Naive thymus-derived CD4-positive, alpha-beta T cell (primary cell): ENCODE measurements at regions of chr19 and their contacts with region 1.

Region 1: GRCh38 chr19:12294249-12295158 is at the start of gene ZNF44:
- DNase-seq: peak; percentile 77 to 96 (median 93)
- ATAC-seq: peak; percentile 99
- H3K4me3 ChIP-seq: peak within 1 kb of the TSS; percentile 99
- H3K4me3 Mint-ChIP-seq: peak within 1 kb of the TSS; percentile 89 to 99 (median 99)
- H3K27ac ChIP-seq: peak within 1 kb of the TSS; percentile 90
- H3K27ac Mint-ChIP-seq: peak within 1 kb of the TSS; percentile 93 to 99 (median 97)
- H3K4me1 ChIP-seq: peaks cover 13 to 20% of the 10 kb centered on the region in 2 donors
- H3K4me1 Mint-ChIP-seq: peaks cover 25 to 52% (median 36%) of the 10 kb centered on the region in 7 donors
- H3K27me3 ChIP-seq: no peaks in the 10 kb centered on the region
- H3K27me3 Mint-ChIP-seq: no peaks in the 10 kb centered on the region
- total RNA-seq, gene ZNF44: 16.3 to 67.4 (median 31.3) TPM

Region 2: GRCh38 chr19:12202250-12202649 is 92.3 kb before region 1 on chr19:
- CTCF ChIA-PET with region 1: interaction called, 5 read pairs
- POLR2A ChIA-PET with region 1: no interaction called
- intact Hi-C with region 1: loop called in 1 of 2 experiments (anchors 2 kb)
- DNase-seq: peak in 8 of 9 donors; percentile 20 to 68 (median 46)
- ATAC-seq: peak; percentile 82
- H3K4me3 ChIP-seq: no peak overlapping the region
- H3K4me3 Mint-ChIP-seq: peak overlapping the region in 4 of 10 donors; percentile 3 to 54 (median 25)
- H3K27ac ChIP-seq: no peak overlapping the region
- H3K27ac Mint-ChIP-seq: peak overlapping the region in 6 of 9 donors; percentile 26 to 81 (median 61)
- H3K4me1 ChIP-seq: no peaks in the 10 kb centered on the region
- H3K4me1 Mint-ChIP-seq: peaks cover 6 to 53% (median 22%) of the 10 kb centered on the region in 7 donors
- H3K27me3 ChIP-seq: no peaks in the 10 kb centered on the region
- H3K27me3 Mint-ChIP-seq: no peaks in the 10 kb centered on the region

Region 3: DNA sequence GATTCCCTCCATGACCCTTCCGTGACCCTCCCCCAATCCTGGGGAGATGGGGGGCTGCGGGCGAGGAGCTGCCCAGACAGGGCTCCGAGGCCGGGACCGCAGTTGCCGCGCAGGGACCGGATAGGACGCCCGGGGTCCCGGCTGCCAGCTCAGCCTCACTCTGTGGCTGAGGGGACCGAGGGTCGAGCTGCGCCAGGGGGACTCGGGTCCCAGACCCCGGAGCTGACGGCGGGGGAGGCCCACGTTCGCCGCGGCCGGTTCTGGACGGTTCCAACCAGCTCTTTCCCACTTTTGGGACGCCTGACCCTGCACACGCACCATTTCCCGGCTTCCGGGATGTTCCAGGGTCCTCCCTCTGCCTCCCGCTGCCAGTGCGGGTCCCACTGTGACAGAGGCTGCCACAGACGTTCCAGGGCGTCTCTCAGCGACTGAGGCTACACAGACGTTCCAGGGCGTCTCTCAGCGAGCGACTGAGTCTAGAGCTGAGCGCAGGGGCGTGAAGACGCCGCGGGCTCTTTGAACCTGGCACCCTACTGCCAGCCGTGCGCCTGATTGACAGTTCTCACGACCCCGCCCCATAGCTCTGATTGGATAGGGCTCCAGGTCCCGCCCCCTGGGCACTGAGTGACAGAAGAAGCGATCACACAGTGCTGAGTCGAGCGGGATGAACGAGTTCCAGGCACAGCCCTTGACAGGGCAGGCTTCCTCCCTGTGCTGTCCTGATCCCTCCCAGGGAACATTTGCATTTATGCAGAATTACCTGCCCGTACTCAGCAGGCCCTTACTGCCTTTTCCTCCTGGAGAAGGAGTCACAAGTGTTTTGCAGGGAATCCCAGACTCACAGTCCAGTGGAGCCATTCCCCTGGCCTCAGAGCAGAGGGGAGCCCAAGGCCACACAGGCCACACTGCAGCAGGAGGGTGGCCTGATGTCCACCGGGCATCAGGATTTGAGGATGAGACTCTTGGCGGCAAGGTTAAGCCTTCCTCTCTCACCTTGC is 39.0 kb after region 1 on chr19 and contains the start of gene ZNF563:
- CTCF ChIA-PET with region 1: interaction called, 6 read pairs
- POLR2A ChIA-PET with region 1: interaction called, 164 read pairs
- intact Hi-C with region 1: loop called (anchors 1 kb)
- DNase-seq: peak; percentile 91 to 99 (median 98)
- ATAC-seq: peak; percentile 99
- H3K4me3 ChIP-seq: peak within 1 kb of the TSS; percentile 61
- H3K4me3 Mint-ChIP-seq: peak within 1 kb of the TSS; percentile 90 to 100 (median 96)
- H3K27ac ChIP-seq: peak within 1 kb of the TSS; percentile 92
- H3K27ac Mint-ChIP-seq: peak within 1 kb of the TSS; percentile 92 to 99 (median 97)
- H3K4me1 ChIP-seq: peaks cover 9 to 22% of the 10 kb centered on the region in 2 donors
- H3K4me1 Mint-ChIP-seq: peaks cover 23 to 49% (median 40%) of the 10 kb centered on the region in 7 donors
- H3K27me3 ChIP-seq: no peaks in the 10 kb centered on the region
- H3K27me3 Mint-ChIP-seq: no peaks in the 10 kb centered on the region
- total RNA-seq, gene ZNF563: 2.8 to 23.2 (median 6.1) TPM

Region 4: GRCh38 chr19:12440541-12441316 is 146.2 kb after region 1 on chr19 and contains the start of gene ZNF443:
- CTCF ChIA-PET with region 1: no interaction called
- POLR2A ChIA-PET with region 1: no interaction called
- intact Hi-C with region 1: loop called (anchors 1 kb)
- DNase-seq: peak; percentile 93 to 99 (median 98)
- ATAC-seq: peak; percentile 99
- H3K4me3 ChIP-seq: peak within 1 kb of the TSS; percentile 80
- H3K4me3 Mint-ChIP-seq: peak within 1 kb of the TSS; percentile 97 to 100 (median 100)
- H3K27ac ChIP-seq: peak within 1 kb of the TSS; percentile 72
- H3K27ac Mint-ChIP-seq: peak within 1 kb of the TSS; percentile 84 to 99 (median 96)
- H3K4me1 ChIP-seq: no peaks in the 10 kb centered on the region
- H3K4me1 Mint-ChIP-seq: peaks cover 12 to 34% (median 24%) of the 10 kb centered on the region in 7 donors
- H3K27me3 ChIP-seq: no peaks in the 10 kb centered on the region
- H3K27me3 Mint-ChIP-seq: no peaks in the 10 kb centered on the region
- total RNA-seq, gene ZNF443: 3.0 to 9.1 (median 4.1) TPM

Region 5: DNA sequence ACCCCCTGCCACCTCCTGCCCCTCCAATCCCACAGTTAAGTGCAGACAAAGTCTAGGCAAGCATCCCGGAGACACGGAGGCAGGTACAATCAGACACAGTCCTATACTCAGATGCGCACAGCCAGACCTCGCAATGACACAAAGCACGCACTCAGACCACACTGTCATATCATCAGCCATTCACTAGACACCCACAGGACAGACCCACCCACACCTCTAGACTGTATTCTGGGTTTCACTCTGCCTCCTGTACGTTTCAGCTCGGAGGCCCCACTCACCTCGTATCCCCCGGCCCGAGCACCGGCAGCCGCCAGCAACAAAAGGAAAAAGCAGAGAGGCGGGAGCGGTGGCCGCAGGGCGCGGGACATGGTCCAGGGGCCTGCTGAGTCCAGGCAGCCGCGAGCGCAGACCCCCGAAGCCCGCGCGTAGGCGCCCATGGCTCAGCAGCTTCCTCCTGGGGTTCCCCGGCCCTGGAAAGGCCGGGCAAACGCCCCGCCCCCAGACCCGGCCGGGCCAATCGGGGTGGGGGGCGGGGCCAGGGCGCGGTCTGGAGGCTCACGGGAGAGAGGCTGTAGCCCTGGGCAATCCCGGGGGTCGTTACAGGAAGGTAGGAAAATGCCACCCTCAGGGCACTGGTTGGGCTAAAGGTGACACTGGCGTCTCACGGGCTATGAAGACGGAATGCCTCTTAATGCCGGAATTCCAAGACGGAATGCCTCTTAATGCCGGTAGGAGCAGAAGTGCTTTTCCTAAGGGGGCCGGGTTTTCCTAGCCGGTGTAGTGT is 372.0 kb after region 1 on chr19 and contains the starts of genes MAN2B1 and WDR83:
- CTCF ChIA-PET with region 1: no interaction called
- POLR2A ChIA-PET with region 1: no interaction called
- intact Hi-C with region 1: loop called in 1 of 2 experiments (anchors 5 kb)
- DNase-seq: peak; percentile 56 to 86 (median 72)
- ATAC-seq: peak; percentile 82
- H3K4me3 ChIP-seq: peak within 1 kb of the TSS; percentile 92
- H3K4me3 Mint-ChIP-seq: peak within 1 kb of the TSS; percentile 90 to 100 (median 98)
- H3K27ac ChIP-seq: peak within 1 kb of the TSS; percentile 99
- H3K27ac Mint-ChIP-seq: peak within 1 kb of the TSS; percentile 77 to 100 (median 91)
- H3K4me1 ChIP-seq: peaks cover 38% of the 10 kb centered on the region in 2 donors
- H3K4me1 Mint-ChIP-seq: peaks cover 22 to 69% (median 45%) of the 10 kb centered on the region in 7 donors
- H3K27me3 ChIP-seq: no peaks in the 10 kb centered on the region
- H3K27me3 Mint-ChIP-seq: no peaks in the 10 kb centered on the region
- total RNA-seq, gene MAN2B1: 105 to 215 (median 138) TPM
- total RNA-seq, gene WDR83: 7.8 to 18.6 (median 14.7) TPM